IMR-90 (cell line): ENCODE measurements at regions of chr3 and their contacts with region 1.

Region 1: GRCh38 chr3:150721285-150722130 is 17.8 kb upstream of the ERICH6 start:
- DNase-seq: peak; percentile 70
- ATAC-seq: peak; percentile 90
- H3K4me3 ChIP-seq: no peak overlapping the region
- H3K27ac ChIP-seq: no peak overlapping the region
- H3K4me1 ChIP-seq: no peaks in the 10 kb centered on the region
- H3K27me3 ChIP-seq: peaks cover 4% of the 10 kb centered on the region
- CTCF ChIP-seq: peak; percentile 89
- POLR2A ChIP-seq: no peak
- RAD21 ChIP-seq: peak; percentile 90

Region 2: GRCh38 chr3:150528354-150528797 is 193.1 kb before region 1 on chr3:
- CTCF ChIA-PET with region 1: no interaction called
- POLR2A ChIA-PET with region 1: no interaction called
- dilution Hi-C with region 1: no loop called
- in situ Hi-C with region 1: no loop called
- intact Hi-C with region 1: loop called (anchors 1 kb)
- DNase-seq: peak; percentile 52
- ATAC-seq: peak; percentile 63
- H3K4me3 ChIP-seq: no peak overlapping the region
- H3K27ac ChIP-seq: no peak overlapping the region
- H3K4me1 ChIP-seq: no peaks in the 10 kb centered on the region
- H3K27me3 ChIP-seq: no peaks in the 10 kb centered on the region
- CTCF ChIP-seq: peak; percentile 51
- POLR2A ChIP-seq: no peak
- RAD21 ChIP-seq: peak; percentile 48

Region 3: GRCh38 chr3:150681057-150681456 is 40.5 kb before region 1 on chr3:
- CTCF ChIA-PET with region 1: no interaction called
- POLR2A ChIA-PET with region 1: no interaction called
- dilution Hi-C with region 1: no loop called
- in situ Hi-C with region 1: no loop called
- intact Hi-C with region 1: no loop called
- DNase-seq: no peak
- ATAC-seq: no peak
- H3K4me3 ChIP-seq: no peak overlapping the region
- H3K27ac ChIP-seq: no peak overlapping the region
- H3K4me1 ChIP-seq: no peaks in the 10 kb centered on the region
- H3K27me3 ChIP-seq: peaks cover 2% of the 10 kb centered on the region
- CTCF ChIP-seq: no peak
- POLR2A ChIP-seq: no peak
- RAD21 ChIP-seq: no peak

Region 4: GRCh38 chr3:150763122-150763841 is 41.8 kb after region 1 on chr3 and contains the start of gene SIAH2:
- CTCF ChIA-PET with region 1: interaction called, 3 read pairs
- POLR2A ChIA-PET with region 1: no interaction called
- dilution Hi-C with region 1: no loop called
- in situ Hi-C with region 1: no loop called
- intact Hi-C with region 1: loop called (anchors 2 kb)
- DNase-seq: peak; percentile 93
- ATAC-seq: peak; percentile 87
- H3K4me3 ChIP-seq: peak within 1 kb of the TSS; percentile 98
- H3K27ac ChIP-seq: peak within 1 kb of the TSS; percentile 94
- H3K4me1 ChIP-seq: peaks cover 9% of the 10 kb centered on the region; the same call in 1 of the 2 replicates
- H3K27me3 ChIP-seq: no peaks in the 10 kb centered on the region
- CTCF ChIP-seq: peak; percentile 11; the same call in 1 of the 2 replicates
- POLR2A ChIP-seq: peak; percentile 87
- RAD21 ChIP-seq: no peak
- total RNA-seq, gene SIAH2: 24.7 and 26.1 TPM in 2 replicates

Region 5: DNA sequence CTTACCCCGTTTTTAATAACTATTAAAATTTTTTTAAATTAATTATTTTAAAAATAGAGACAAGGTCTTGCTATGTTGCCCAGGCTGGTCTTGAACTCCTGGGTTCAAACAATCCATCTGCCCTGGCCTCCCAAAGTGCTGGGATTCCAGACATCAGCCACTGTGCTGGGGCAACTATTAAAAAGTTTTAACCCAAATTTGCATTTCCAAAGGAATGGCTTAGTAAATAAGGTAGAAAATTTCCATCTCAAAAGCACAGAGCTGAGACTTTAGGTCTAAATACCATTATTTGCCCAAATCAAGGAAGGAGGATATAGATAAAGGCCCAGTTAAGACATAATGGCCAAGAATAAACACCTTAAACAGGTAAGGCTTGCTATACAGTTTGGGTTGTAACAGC is 127.4 kb after region 1 on chr3:
- CTCF ChIA-PET with region 1: no interaction called
- POLR2A ChIA-PET with region 1: no interaction called
- dilution Hi-C with region 1: no loop called
- in situ Hi-C with region 1: no loop called
- intact Hi-C with region 1: loop called (anchors 5 kb)
- DNase-seq: no peak
- ATAC-seq: no peak
- H3K4me3 ChIP-seq: no peak overlapping the region
- H3K27ac ChIP-seq: no peak overlapping the region
- H3K4me1 ChIP-seq: no peaks in the 10 kb centered on the region
- H3K27me3 ChIP-seq: 0 out of 2 replicates have a peak, but pooled peaks cover 2% of the 10 kb centered on the region
- CTCF ChIP-seq: no peak
- POLR2A ChIP-seq: no peak
- RAD21 ChIP-seq: no peak

Region 6: DNA sequence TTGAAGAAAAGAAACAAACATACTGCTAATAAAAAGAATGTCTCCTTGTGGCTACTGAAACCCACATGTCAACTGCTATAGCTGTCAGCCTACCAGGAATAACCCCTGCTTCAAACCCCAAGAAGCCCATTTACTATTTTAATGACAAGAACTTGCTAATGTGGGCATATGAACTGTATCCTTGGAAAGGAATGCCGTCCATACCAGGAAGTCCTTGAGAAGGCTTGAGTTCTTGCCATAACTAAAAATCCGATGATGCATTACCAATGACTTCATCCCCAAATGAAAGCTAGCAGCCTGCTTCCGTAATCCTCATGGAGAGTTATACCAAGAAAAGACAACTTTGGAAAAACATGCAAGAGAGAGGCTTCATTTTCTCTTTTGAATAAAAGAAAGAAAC is 148.9 kb after region 1 on chr3:
- CTCF ChIA-PET with region 1: interaction called, 8 read pairs
- POLR2A ChIA-PET with region 1: no interaction called
- dilution Hi-C with region 1: no loop called
- in situ Hi-C with region 1: loop called (anchors 5 kb)
- intact Hi-C with region 1: loop called (anchors 1 kb)
- DNase-seq: peak; percentile 52
- ATAC-seq: peak; percentile 54
- H3K4me3 ChIP-seq: no peak overlapping the region
- H3K27ac ChIP-seq: no peak overlapping the region
- H3K4me1 ChIP-seq: no peaks in the 10 kb centered on the region; the same call in 1 of the 2 replicates
- H3K27me3 ChIP-seq: no peaks in the 10 kb centered on the region; the same call in 1 of the 2 replicates
- CTCF ChIP-seq: no peak
- POLR2A ChIP-seq: no peak
- RAD21 ChIP-seq: no peak

Region 7: DNA sequence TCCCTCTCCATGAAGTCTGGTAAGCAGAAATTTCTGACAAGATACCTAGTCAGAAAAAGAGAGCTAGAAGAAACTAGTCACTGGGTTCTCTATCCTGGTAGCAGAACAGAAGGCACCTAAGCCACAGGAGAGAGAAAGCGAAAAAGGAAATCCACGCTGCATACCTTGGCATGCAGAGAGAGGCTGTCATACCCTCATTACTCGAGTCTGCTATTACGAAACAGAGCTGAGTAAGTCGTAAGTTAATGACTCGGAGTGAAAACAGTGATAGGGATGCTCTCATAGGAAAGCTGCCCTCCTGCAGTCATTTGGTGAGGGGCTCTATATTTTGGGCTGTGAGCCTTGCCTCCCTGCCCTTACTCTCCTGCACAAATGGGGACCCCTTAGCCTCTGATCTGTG is 234.9 kb after region 1 on chr3:
- CTCF ChIA-PET with region 1: no interaction called
- POLR2A ChIA-PET with region 1: no interaction called
- dilution Hi-C with region 1: no loop called
- in situ Hi-C with region 1: no loop called
- intact Hi-C with region 1: no loop called
- DNase-seq: peak; percentile 42
- ATAC-seq: peak; percentile 17; the same call in 1 of the 2 replicates
- H3K4me3 ChIP-seq: no peak overlapping the region
- H3K27ac ChIP-seq: no peak overlapping the region
- H3K4me1 ChIP-seq: no peaks in the 10 kb centered on the region
- H3K27me3 ChIP-seq: peaks cover 13% of the 10 kb centered on the region
- CTCF ChIP-seq: no peak
- POLR2A ChIP-seq: no peak
- RAD21 ChIP-seq: no peak

Region 8: DNA sequence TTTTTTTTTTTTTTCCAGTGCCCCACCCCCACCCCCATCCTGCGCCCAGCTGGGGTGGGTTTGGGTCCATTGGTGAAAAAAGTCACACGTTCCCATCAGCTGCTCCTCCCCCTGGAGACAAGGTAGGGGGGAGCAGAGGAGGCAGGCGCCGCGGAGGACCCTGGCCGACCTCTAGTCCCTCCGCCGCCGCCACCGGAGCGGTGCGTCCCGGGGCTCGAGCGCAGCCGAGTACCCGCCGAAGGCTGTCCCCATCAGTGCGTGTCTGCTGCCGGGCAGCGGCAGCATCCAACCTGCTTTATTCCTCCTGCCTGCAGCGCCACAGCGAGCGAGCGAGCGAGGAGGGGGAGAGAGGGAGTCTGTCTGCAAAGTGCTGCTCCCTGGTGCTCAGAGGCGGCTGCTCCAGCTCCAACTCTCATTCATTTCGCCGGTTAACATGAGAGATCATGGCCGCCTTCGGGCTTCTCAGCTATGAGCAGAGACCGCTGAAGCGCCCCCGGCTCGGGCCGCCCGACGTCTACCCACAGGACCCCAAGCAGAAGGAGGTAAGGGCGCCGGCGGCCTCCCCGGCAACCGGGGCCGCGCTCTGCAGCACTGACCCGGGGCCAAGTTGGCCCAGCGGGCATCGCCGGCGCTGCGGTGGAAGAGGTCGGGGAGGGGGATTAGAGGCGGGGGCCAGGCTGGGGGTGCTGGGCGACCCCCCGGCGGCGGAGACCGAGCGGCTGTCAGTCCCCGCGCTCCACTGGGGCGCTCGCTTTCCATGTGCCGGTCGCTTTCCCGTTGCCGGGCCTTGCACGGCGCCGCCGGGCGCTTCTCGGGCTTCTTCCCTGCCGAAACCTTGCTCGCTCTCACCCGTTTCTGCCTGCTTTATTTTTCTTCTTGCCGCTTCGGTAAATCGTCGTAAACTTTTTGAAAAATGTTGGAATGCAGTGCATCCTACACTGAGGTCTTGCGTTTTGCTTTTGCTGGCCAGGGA is 365.3 kb after region 1 on chr3:
- CTCF ChIA-PET with region 1: no interaction called
- POLR2A ChIA-PET with region 1: no interaction called
- dilution Hi-C with region 1: no loop called
- in situ Hi-C with region 1: no loop called
- intact Hi-C with region 1: loop called (anchors 5 kb)
- DNase-seq: peak; percentile 86
- ATAC-seq: peak; percentile 90
- H3K4me3 ChIP-seq: peak overlapping the region; percentile 38
- H3K27ac ChIP-seq: no peak overlapping the region
- H3K4me1 ChIP-seq: no peaks in the 10 kb centered on the region
- H3K27me3 ChIP-seq: peaks cover 47% of the 10 kb centered on the region
- CTCF ChIP-seq: peak; percentile 66
- POLR2A ChIP-seq: no peak
- RAD21 ChIP-seq: peak; percentile 57